ENCODE measurements at regions of chr12 and their contacts with region 1.

Region 1: DNA sequence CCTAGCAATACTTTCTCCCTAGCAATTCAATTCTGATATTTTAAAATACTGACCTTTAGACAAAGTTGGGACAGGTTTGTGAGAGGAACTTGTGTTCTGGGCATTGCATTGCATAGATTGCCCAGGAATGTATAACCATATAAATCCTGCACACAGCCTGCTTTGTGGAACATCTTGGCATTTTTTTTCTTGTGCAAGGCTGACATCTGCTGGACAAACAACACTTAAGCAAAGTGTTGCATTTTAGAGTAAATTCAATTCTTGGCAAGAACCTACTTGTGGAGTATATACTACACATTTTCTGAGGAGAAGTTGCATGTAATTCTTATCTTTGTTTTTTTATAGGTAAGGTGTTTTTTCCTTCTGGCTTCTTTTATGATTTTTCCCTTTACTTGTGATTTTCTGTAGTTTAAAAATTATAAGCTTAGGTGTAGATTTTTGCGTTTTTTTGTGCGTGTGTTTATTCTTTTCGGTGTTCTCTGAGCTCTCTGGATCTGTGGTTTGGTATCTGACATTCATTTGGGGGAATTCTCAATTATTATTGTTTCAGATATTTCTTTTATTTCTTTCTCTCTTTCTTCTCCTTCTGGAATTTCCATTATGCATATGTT is 26.4 kb downstream of the TESPA1 start:
- DNase-seq: peak; percentile 29
- H3K27ac ChIP-seq: no peak overlapping the region
- CTCF ChIP-seq: peak; percentile 65

Region 2: DNA sequence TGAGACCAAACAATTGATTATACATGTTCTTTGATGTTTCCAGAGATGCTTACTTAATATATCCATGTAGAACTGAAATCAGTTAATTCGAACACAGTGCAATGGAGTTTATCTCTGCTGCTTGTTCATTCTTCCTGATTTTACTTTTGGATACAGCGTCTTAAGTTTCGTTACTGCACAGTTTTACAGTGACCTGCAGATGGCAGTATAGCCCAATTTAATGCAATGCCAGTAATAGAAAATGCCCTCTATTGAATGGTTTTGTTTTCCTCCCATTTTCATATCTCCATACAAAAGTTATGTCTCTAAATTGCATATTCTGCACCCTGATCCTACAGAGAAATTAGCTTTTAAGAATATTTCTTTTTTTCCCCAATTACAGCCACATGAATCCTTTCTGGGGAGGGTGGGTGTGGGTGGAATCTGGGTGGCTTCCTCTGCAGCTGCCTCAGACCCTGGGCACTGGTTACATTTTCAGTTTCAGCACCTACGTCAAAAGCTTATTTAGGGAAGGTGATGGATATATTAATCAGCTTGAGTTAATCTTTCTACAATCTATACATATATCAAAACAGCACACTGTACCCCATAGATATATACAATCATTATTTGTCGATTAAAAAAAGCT is 208.8 kb before region 1 on chr12:
- CTCF ChIA-PET with region 1: interaction called, 23 read pairs
- POLR2A ChIA-PET with region 1: no interaction called
- DNase-seq: peak; percentile 55
- H3K27ac ChIP-seq: no peak overlapping the region
- CTCF ChIP-seq: peak; percentile 78

Measured in RWPE1 (cell line).